ENCODE measurements at regions of chr1 and their contacts with region 1.

Region 1: DNA sequence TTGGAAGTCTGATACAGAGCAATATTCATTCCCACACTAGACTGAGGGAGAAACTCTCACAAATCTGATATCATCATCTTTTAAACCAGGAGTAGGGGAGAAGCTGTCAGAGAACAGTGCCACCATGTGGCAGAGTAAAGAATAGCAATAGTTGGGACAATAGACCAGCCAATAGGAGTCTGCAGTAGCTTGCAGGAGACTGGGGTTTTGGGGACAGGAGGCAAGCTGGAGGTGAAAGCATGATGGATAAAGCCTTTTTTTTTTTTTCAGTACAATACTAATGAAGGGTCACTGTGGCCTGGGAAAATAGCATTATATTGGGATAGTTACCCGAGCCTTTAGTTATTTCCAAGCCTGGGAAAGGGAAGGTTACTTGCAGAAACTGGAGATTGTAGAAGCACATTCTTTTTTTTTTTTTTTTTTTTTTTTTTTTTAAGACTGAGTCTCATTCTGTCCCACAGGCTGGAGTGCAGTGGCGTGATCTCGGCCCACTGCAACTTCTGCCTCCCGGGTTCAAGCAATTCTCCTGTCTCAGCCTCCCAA is 120.7 kb downstream of the S1PR1 start:
- DNase-seq: peak; percentile 55 to 70
- H3K4me3 ChIP-seq: no peak overlapping the region
- H3K27ac ChIP-seq: no peak overlapping the region
- H3K4me1 ChIP-seq: no peaks in the 10 kb centered on the region
- H3K27me3 ChIP-seq: peaks cover 20% of the 10 kb centered on the region
- CTCF ChIP-seq: peak; percentile 97

Region 2: DNA sequence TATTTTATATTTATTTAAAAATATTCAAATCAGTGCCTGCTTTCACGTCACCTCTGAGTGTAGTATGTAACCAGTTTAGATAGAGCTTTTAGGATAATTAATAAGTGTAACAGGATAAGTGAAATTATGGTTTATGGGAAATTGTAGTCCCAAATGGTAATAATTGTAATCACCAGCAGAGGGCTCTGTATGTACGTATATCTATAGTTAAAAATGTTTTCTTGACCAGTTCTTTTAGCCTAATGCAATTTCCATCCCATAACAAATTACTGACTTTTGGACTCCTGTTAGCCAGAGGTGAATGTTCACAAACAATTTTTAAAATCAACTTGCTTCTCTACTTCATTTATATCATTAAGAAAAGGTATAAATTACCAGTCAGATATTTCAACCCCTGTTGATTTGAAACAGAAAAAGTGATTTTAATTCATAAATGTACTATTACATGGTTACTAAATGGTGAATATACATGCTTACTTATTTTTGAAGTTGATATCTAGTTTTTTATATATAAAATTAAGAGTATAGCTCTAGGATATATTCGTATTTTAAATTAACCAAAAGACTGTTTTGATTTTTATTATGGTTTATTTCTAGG is 436.3 kb before region 1 on chr1:
- CTCF ChIA-PET with region 1: no interaction called
- POLR2A ChIA-PET with region 1: no interaction called
- intact Hi-C with region 1: loop called (anchors 2 kb)
- DNase-seq: no peak
- H3K4me3 ChIP-seq: no peak overlapping the region
- H3K27ac ChIP-seq: no peak overlapping the region
- H3K4me1 ChIP-seq: no peaks in the 10 kb centered on the region
- H3K27me3 ChIP-seq: no peaks in the 10 kb centered on the region
- CTCF ChIP-seq: peak; percentile 95

Region 3: DNA sequence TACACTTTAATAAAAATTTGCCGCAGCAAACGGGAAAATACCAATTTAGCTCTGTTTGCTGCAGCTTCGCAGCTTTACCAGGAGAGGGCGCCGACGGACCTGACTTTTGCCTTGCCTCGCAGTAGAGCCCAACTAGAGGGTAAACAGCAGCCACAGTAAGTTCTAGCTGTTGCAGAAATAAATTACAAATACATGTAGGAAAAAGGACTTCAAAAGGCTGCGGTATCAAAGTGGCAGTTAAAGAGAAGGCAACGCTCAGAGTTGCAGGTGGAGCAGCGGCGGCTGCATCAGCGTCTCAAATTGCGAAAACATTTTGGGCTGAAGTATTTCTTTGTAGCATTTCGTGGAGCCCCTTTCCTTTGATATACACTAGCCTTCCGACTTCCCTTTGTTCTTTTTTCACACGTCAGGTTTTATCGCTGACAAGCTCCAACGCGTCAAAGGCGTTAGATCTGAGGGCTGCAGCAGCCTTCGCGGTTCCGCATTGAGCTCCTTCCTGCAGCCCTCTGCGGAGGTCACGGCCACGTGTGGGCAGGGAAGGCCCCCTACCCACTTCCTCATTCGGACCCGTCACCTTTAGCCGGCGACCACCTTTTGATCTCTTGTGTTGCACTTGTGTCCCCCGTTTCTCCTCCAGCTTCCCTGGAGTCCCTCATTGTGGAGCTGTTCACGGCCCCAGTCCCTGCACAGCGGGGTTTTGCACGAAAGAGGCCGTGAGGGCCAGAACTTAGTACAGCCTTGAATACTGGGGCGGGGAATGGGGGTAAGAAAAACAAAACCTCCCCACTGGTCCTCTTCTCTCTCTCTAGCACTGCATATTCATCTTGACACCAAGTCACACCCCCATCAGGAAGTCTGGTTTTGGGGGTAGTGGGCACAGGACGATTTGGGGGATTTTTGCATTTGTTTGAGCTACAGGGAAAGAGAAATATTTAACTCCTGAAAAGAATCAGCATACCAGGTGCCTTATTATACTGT is 47.9 kb before region 1 on chr1:
- CTCF ChIA-PET with region 1: interaction called, 7 read pairs
- POLR2A ChIA-PET with region 1: no interaction called
- intact Hi-C with region 1: loop called (anchors 1 kb)
- DNase-seq: peak; percentile 25 to 51
- H3K4me3 ChIP-seq: no peak overlapping the region
- H3K27ac ChIP-seq: no peak overlapping the region
- H3K4me1 ChIP-seq: no peaks in the 10 kb centered on the region
- H3K27me3 ChIP-seq: peaks cover 49% of the 10 kb centered on the region; the same call in 1 of the 2 replicates
- CTCF ChIP-seq: peak; percentile 97

Measured in PC-9 (cell line).